Naive thymus-derived CD4-positive, alpha-beta T cell (primary cell): ENCODE measurements at regions of chr21 and their contacts with region 1.

Region 1: GRCh38 chr21:33127154-33127893 is 57.4 kb downstream of the OLIG1 start:
- DNase-seq: peak; percentile 21 to 60 (median 43)
- ATAC-seq: peak; percentile 87
- H3K4me3 ChIP-seq: peak overlapping the region; percentile 60
- H3K4me3 Mint-ChIP-seq: peak overlapping the region; percentile 52 to 86 (median 78)
- H3K27ac ChIP-seq: no peak overlapping the region
- H3K27ac Mint-ChIP-seq: peak overlapping the region in 5 of 9 donors; percentile 26 to 60 (median 50)
- H3K4me1 ChIP-seq: no peaks in the 10 kb centered on the region
- H3K4me1 Mint-ChIP-seq: peaks cover 0 to 13% (median 6%) of the 10 kb centered on the region in 7 donors
- H3K27me3 ChIP-seq: no peaks in the 10 kb centered on the region
- H3K27me3 Mint-ChIP-seq: peaks cover 10 to 31% (median 27%) of the 10 kb centered on the region in 5 donors

Region 2: DNA sequence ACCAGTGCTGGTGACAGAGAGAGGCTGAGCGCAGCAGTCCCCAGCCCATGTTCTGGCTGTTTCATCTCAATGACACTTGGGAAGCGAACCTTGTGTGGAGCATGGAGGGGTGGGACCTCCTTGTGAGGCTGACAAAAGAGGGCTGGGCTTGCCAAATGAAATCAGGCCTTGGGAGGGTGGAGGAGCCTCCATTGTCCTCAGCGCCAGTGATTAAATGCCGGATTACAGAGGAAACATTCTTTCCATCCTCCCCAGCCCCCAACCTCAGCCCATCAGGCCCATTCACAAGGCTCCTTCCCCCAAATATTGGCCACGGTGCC is 292.4 kb before region 1 on chr21:
- CTCF ChIA-PET with region 1: interaction called, 3 read pairs
- POLR2A ChIA-PET with region 1: no interaction called
- intact Hi-C with region 1: loop called (anchors 2 kb)
- DNase-seq: no peak
- ATAC-seq: no peak
- H3K4me3 ChIP-seq: no peak overlapping the region
- H3K4me3 Mint-ChIP-seq: no peak overlapping the region
- H3K27ac ChIP-seq: no peak overlapping the region
- H3K27ac Mint-ChIP-seq: no peak overlapping the region
- H3K4me1 ChIP-seq: no peaks in the 10 kb centered on the region
- H3K4me1 Mint-ChIP-seq: peaks cover 0 to 2% (median 0%) of the 10 kb centered on the region in 7 donors
- H3K27me3 ChIP-seq: peaks cover 0 to 5% of the 10 kb centered on the region in 2 donors
- H3K27me3 Mint-ChIP-seq: peaks cover 0 to 30% (median 0%) of the 10 kb centered on the region in 5 donors

Region 3: DNA sequence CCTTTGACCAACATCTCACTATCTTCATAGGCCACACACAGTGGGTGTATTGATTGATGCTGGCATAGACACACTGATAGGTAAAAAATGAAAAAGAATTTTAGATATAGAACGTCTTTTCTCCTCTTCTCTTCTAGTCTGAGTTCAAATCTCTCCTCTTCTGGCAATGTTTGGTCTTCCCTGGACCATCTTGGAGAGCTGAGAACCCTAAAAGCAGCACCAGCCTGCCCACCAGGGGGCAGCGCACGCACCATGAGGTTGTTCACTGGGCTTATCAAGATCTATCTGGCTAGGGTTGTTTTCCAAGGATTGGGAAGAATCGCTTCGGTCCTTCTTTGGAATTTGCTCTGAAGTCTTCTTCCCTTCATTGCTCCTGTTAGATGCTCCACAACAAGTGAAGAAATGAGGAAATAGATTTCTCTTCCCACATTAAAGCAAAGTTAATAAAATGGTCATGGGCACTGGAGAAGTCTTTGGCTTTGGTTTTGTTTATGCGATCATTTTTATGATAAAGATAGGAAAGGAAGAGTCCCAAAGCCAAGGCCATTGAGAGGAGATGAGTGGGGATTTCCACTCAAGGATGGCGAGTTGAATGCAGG is 205.6 kb before region 1 on chr21:
- CTCF ChIA-PET with region 1: interaction called, 5 read pairs
- POLR2A ChIA-PET with region 1: no interaction called
- intact Hi-C with region 1: loop called in 1 of 2 experiments (anchors 1 kb)
- DNase-seq: peak in 5 of 9 donors; percentile 27 to 49 (median 35)
- ATAC-seq: no peak
- H3K4me3 ChIP-seq: no peak overlapping the region
- H3K4me3 Mint-ChIP-seq: no peak overlapping the region
- H3K27ac ChIP-seq: no peak overlapping the region
- H3K27ac Mint-ChIP-seq: peak overlapping the region in 2 of 9 donors; percentile 22 to 63
- H3K4me1 ChIP-seq: peaks cover 0 to 3% of the 10 kb centered on the region in 2 donors
- H3K4me1 Mint-ChIP-seq: peaks cover 4 to 20% (median 11%) of the 10 kb centered on the region in 7 donors
- H3K27me3 ChIP-seq: no peaks in the 10 kb centered on the region
- H3K27me3 Mint-ChIP-seq: peaks cover 0 to 18% (median 0%) of the 10 kb centered on the region in 5 donors

Region 4: DNA sequence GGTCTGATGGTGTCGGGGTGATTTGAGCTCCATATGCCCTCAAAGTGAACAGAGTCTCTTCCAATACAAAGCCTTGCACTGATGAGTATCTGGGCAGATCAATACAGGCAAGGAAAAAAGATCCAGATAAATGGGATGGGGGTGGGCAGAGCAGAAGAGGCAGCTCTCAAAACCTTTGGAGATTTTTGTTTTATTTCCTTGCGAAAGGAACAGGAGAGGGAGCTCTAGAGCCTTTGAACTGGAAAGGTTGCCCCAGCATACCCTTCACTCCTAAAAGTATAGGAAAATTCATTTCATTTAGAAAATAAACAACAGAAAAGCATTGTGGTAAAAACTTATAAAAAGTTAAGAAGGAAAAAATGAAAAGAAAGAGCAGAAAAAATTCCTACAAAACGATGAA is 133.0 kb before region 1 on chr21:
- CTCF ChIA-PET with region 1: no interaction called
- POLR2A ChIA-PET with region 1: no interaction called
- intact Hi-C with region 1: loop called (anchors 1 to 10 kb)
- DNase-seq: peak in 1 of 9 donors; percentile 10
- ATAC-seq: no peak
- H3K4me3 ChIP-seq: no peak overlapping the region
- H3K4me3 Mint-ChIP-seq: no peak overlapping the region
- H3K27ac ChIP-seq: no peak overlapping the region
- H3K27ac Mint-ChIP-seq: no peak overlapping the region
- H3K4me1 ChIP-seq: no peaks in the 10 kb centered on the region
- H3K4me1 Mint-ChIP-seq: peaks cover 0 to 2% (median 0%) of the 10 kb centered on the region in 7 donors
- H3K27me3 ChIP-seq: no peaks in the 10 kb centered on the region
- H3K27me3 Mint-ChIP-seq: peaks cover 5 to 57% (median 20%) of the 10 kb centered on the region in 5 donors

Region 5: GRCh38 chr21:33059380-33059841 is 67.9 kb before region 1 on chr21:
- CTCF ChIA-PET with region 1: no interaction called
- POLR2A ChIA-PET with region 1: no interaction called
- intact Hi-C with region 1: no loop called
- DNase-seq: no peak
- ATAC-seq: peak; percentile 82
- H3K4me3 ChIP-seq: no peak overlapping the region
- H3K4me3 Mint-ChIP-seq: no peak overlapping the region
- H3K27ac ChIP-seq: no peak overlapping the region
- H3K27ac Mint-ChIP-seq: peak overlapping the region in 1 of 9 donors; percentile 68
- H3K4me1 ChIP-seq: no peaks in the 10 kb centered on the region
- H3K4me1 Mint-ChIP-seq: peaks cover 0 to 19% (median 4%) of the 10 kb centered on the region in 7 donors
- H3K27me3 ChIP-seq: no peaks in the 10 kb centered on the region
- H3K27me3 Mint-ChIP-seq: peaks cover 11 to 22% (median 14%) of the 10 kb centered on the region in 5 donors

Region 6: DNA sequence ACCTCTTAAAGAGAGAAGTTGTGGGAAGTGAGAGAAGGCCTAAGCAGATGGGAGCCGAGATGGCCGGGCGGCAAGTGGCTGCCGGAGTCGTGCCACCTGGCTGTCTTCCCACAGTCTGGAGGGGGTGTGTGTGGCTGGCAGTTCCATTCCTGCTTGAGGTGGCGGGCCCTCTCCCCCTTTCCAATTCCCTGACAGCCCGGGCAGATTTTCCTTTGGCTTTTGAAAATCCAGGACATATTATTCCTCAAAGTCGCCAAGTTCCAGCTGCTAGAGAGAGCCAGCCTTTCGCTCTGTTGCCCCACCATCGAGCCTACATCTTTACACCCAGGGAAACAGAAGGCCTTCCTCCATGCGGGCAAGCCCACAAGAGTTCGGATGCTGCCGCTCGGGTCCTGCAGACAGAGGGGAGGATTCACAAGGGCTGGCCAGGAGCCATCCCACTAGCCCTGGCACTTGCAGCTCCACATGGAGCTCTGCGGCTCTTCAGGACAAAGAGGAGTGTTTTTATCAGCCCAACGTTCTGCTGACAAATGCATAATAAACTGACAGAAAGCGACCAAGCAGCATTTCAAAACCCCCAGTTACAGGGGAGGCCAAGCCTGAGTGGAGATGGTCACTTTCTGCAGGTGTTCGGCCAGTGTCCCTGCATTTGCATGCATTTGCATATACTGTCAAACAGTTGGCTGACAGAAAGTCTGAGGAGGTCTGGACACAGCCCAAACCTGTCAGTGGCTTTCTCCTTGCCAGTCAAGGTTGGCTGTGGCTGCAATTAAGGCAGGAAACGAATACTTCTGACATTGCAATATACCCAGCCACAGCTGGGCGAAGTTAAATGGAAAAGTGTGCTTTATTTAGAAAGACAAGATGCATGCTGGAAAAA is 11.5 kb before region 1 on chr21:
- CTCF ChIA-PET with region 1: interaction called, 11 read pairs
- POLR2A ChIA-PET with region 1: no interaction called
- intact Hi-C with region 1: no loop called
- DNase-seq: no peak
- ATAC-seq: no peak
- H3K4me3 ChIP-seq: peak overlapping the region; percentile 5
- H3K4me3 Mint-ChIP-seq: peak overlapping the region; percentile 36 to 81 (median 72)
- H3K27ac ChIP-seq: no peak overlapping the region
- H3K27ac Mint-ChIP-seq: peak overlapping the region in 4 of 9 donors; percentile 3 to 72 (median 50)
- H3K4me1 ChIP-seq: peaks cover 7 to 31% of the 10 kb centered on the region in 2 donors
- H3K4me1 Mint-ChIP-seq: peaks cover 10 to 46% (median 32%) of the 10 kb centered on the region in 7 donors
- H3K27me3 ChIP-seq: no peaks in the 10 kb centered on the region
- H3K27me3 Mint-ChIP-seq: peaks cover 3 to 50% (median 10%) of the 10 kb centered on the region in 5 donors

Region 7: DNA sequence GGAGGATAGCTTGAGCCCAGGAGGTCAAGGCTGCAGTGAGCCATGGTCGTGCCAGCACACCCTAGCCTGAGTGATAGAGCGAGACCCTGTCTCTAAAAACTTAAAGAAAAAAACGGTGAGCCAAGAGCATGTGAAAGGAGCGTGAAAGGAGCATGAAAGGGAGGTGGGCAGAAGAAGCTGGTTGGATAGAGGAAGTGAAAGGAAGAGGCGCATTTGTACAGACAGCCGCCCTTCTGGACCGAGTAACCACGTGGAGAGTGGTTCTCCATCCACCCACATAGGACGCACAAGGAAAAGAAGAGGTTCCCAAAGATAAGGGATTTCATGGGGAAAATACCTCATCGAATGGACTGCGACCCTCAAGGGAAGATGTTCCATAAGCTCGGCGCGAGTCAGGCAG is 42.0 kb after region 1 on chr21:
- CTCF ChIA-PET with region 1: no interaction called
- POLR2A ChIA-PET with region 1: no interaction called
- intact Hi-C with region 1: no loop called
- DNase-seq: no peak
- ATAC-seq: no peak
- H3K4me3 ChIP-seq: no peak overlapping the region
- H3K4me3 Mint-ChIP-seq: no peak overlapping the region
- H3K27ac ChIP-seq: no peak overlapping the region
- H3K27ac Mint-ChIP-seq: no peak overlapping the region
- H3K4me1 ChIP-seq: no peaks in the 10 kb centered on the region
- H3K4me1 Mint-ChIP-seq: no peaks in the 10 kb centered on the region
- H3K27me3 ChIP-seq: no peaks in the 10 kb centered on the region
- H3K27me3 Mint-ChIP-seq: peaks cover 0 to 18% (median 10%) of the 10 kb centered on the region in 5 donors